ENCODE measurements at regions of chr1 and their contacts with region 1.

Region 1: GRCh38 chr1:178093205-178093957 is 523 bp upstream of the RASAL2 start:
- DNase-seq: peak; percentile 95
- ATAC-seq: peak; percentile 92

Region 2: DNA sequence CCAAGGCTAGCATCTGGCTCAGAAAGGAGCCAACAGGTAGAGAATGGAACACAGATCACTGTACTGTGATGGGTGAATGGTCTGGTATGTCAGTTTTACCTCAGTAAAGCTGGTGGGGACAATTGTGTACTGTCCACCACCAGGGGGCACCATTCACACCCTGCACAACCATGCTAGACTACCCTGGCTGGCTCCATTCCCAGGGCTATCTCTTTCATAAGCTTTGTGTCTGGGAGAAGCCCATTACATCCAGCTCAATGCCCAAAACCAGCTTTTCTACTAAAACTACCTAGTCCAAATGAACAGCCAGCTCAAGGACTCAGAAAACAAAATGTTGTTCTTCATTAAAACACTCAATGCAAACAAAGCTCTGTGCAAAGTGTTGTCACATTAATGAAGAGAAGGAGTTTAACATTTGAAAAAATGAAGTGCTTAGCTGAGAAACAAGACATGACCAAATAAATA is 61.5 kb before region 1 on chr1:
- intact Hi-C with region 1: loop called (anchors 10 kb)
- DNase-seq: peak; percentile 87
- ATAC-seq: peak; percentile 70

Region 3: GRCh38 chr1:178060789-178061556 is 32.4 kb before region 1 on chr1:
- intact Hi-C with region 1: loop called (anchors 2 kb)
- DNase-seq: no peak
- ATAC-seq: no peak

Region 4: GRCh38 chr1:178172954-178173353 is 79.6 kb after region 1 on chr1:
- intact Hi-C with region 1: loop called (anchors 10 kb)
- DNase-seq: no peak
- ATAC-seq: no peak

Region 5: DNA sequence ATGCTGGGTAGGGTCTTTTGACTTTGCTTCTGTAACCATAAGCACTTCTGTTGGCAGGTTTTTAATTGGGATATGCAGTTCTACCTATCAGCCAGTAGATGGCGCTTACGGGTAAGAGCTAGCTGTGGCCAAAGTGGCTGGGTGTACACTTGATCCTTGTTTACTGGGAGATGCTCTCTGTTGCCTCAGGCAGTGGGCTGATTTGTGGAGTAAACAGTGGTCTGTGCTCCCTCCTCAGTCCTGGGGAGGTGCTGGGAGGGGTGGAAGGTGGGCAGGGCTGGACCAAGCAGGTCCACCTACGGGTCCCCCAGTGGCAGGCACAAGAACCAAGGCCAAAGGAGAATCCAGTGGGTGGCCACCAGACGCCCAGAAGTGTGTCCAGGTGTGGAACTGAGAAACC is 675.0 kb after region 1 on chr1:
- intact Hi-C with region 1: no loop called
- DNase-seq: no peak
- ATAC-seq: peak; percentile 39